PC-9 (cell line): ENCODE measurements at regions of chr11 and their contacts with region 1.

Region 1: DNA sequence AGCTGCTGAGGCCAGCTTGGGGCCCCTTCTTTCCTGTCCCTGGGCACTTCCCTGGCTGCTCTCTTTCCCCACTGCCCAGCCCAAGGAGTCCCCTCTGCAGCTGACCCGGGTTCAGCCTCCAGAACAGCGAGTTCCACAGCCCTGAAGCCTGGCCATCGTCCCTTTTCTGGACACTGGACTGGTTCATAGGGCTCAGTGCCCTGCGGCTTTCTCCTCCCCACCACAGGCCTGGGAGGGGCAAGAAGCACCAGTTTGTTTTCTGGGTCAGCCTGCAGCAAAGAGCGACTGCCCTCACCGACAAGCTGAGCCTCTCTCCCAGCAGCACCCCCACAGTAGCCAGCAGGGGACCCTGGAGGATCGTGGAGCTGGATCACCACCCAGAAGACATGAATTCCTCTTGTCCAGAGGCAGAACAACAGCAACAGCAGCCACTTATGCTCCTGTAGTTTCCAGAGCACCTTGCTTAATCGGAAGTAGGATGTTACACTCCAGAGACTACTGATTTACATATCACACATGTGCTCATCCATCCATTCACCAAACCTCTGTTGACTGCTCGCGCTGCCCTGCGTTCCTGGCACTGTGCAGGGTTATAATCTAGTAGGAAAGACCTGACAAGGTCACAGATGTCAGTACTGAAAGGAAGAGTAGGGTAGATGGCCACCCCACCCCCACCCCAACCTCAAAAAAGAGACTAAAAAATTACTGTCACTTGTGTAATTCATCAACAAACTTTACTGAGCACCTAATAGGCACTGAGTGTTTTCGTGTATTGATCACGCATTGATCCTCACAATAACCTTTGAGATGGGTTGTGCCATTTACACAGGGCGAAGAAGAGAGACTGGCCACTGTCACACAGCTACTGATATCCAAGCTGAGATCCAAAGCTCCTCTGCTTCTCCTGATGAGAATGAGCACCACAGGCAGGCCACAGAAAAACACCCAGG is 13.0 kb upstream of the CXCR5 start:
- DNase-seq: peak; percentile 64 to 67
- H3K4me3 ChIP-seq: peak overlapping the region; percentile 42; the same call in 1 of the 2 replicates
- H3K27ac ChIP-seq: peak overlapping the region; percentile 62
- H3K4me1 ChIP-seq: peaks cover 19% of the 10 kb centered on the region
- H3K27me3 ChIP-seq: no peaks in the 10 kb centered on the region
- CTCF ChIP-seq: no peak

Region 2: DNA sequence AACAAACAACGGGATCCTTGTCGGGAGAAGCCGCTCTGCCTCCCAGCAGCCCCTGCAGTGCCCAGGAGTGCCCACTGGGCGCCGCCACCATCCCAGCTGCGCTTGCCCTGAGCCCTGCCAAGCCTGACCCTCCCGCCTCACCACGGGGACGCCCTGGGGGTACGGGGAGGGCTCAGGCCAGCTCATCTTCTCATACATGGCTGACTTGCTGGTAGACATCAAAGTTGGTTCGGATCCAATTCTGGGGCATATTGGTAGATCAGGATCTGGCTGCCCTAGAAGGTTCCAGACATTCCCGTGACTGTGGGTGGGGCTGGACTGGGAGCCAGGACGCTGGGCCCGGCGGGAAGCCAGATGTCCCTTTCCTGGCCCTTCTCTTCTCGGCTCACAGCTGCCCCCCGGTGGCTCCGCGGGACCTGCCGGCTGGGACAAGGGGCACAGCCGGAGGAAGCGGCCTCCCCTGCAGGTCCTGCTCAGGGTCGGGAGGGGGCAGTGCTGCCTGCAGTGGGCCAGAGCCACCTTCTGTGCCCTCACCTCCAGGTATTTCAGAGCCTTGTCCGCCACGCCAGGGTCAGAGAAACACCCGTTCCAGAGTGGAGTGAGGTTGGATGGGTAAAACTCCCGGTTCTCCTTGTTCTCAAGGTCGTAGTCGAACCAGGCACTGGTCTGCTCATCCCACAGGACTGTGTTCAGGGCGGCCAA is 180.7 kb before region 1 on chr11:
- CTCF ChIA-PET with region 1: no interaction called
- POLR2A ChIA-PET with region 1: no interaction called
- intact Hi-C with region 1: loop called (anchors 1 kb)
- DNase-seq: peak; percentile 82 to 92
- H3K4me3 ChIP-seq: peak overlapping the region; percentile 61
- H3K27ac ChIP-seq: no peak overlapping the region
- H3K4me1 ChIP-seq: peaks cover 5% of the 10 kb centered on the region
- H3K27me3 ChIP-seq: no peaks in the 10 kb centered on the region
- CTCF ChIP-seq: peak; percentile 91

Region 3: DNA sequence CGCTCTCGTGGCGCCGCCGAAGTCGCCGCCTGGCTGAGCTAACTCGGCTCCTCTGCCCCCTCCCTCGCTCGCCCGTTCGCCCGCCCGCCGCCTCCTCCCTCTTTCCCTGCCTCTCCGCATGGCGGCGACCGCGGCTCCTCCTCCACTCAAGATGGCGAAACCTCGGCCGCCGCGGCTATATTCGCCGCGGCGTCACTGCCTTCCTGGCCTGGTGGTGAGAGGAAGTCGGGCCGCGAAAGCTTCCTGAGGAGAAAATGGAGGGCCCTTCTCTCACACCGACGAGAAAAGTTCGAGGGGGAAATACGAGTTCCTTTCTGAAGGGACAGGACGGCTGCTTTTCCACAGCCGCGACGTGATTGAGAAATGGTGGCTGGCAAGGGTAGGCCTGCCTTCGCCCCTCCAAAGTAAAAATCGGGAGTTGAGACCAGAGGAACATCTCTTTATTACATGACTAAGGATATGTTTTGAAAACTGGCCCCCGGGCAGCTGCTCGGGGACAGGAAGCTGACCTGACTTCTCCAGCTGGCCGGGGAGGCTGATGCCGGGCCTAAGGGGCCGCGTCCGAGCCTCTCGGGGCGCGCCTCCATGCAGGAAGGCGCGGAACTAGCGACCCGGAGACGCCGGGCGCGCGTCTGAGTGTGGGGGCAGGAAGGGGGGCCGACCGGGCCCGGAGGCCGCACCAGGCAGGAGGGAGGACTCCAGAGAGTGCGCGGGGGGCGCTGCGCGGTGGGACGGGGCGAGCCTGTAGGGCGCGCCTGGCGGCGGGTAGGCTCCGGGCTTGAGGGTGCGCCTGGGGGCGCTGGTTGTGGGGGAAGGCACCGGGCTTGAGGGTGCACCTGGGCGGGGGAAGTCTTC is 79.3 kb before region 1 on chr11 and contains the start of gene DDX6:
- CTCF ChIA-PET with region 1: interaction called, 7 read pairs
- POLR2A ChIA-PET with region 1: interaction called, 22 read pairs
- intact Hi-C with region 1: loop called (anchors 1 kb)
- DNase-seq: peak; percentile 73 to 85
- H3K4me3 ChIP-seq: peak within 1 kb of the TSS; percentile 98
- H3K27ac ChIP-seq: peak within 1 kb of the TSS; percentile 85
- H3K4me1 ChIP-seq: peaks cover 20% of the 10 kb centered on the region
- H3K27me3 ChIP-seq: no peaks in the 10 kb centered on the region
- CTCF ChIP-seq: peak; percentile 53
- total RNA-seq, gene DDX6: 73.1 and 84.4 TPM in 2 replicates

Region 4: GRCh38 chr11:118827118-118827517 is 43.6 kb before region 1 on chr11:
- CTCF ChIA-PET with region 1: no interaction called
- POLR2A ChIA-PET with region 1: no interaction called
- intact Hi-C with region 1: no loop called
- DNase-seq: no peak
- H3K4me3 ChIP-seq: no peak overlapping the region
- H3K27ac ChIP-seq: no peak overlapping the region
- H3K4me1 ChIP-seq: no peaks in the 10 kb centered on the region
- H3K27me3 ChIP-seq: no peaks in the 10 kb centered on the region
- CTCF ChIP-seq: no peak

Region 5: GRCh38 chr11:118851970-118852369 is 18.7 kb before region 1 on chr11:
- CTCF ChIA-PET with region 1: interaction called, 7 read pairs
- POLR2A ChIA-PET with region 1: no interaction called
- intact Hi-C with region 1: loop called (anchors 1 kb)
- DNase-seq: no peak
- H3K4me3 ChIP-seq: no peak overlapping the region
- H3K27ac ChIP-seq: no peak overlapping the region
- H3K4me1 ChIP-seq: no peaks in the 10 kb centered on the region
- H3K27me3 ChIP-seq: no peaks in the 10 kb centered on the region
- CTCF ChIP-seq: no peak

Region 6: DNA sequence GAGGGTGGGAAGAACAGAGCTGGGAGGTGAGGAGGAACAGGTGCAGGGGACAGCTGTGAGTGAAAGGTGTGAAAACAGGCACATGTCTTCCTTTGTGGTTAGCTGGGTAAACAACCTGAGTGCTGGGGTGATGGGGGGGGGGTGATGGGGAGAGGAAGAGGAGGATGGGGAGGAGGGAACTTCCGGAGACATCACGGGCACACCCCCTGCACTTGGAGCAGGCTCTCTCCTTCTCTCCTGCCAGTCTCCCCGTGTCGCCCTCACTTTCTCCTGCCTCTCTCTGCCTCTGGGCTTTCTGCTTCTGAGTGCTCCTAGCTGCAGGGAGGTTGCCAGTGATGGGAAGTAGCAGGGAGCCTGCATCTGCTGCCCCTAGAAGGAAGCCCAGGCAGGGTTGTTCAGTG is 21.9 kb after region 1 on chr11:
- CTCF ChIA-PET with region 1: interaction called, 3 read pairs
- POLR2A ChIA-PET with region 1: interaction called, 12 read pairs
- intact Hi-C with region 1: no loop called
- DNase-seq: peak; percentile 28 to 54
- H3K4me3 ChIP-seq: no peak overlapping the region
- H3K27ac ChIP-seq: no peak overlapping the region
- H3K4me1 ChIP-seq: peaks cover 22% of the 10 kb centered on the region
- H3K27me3 ChIP-seq: no peaks in the 10 kb centered on the region
- CTCF ChIP-seq: no peak

Region 7: DNA sequence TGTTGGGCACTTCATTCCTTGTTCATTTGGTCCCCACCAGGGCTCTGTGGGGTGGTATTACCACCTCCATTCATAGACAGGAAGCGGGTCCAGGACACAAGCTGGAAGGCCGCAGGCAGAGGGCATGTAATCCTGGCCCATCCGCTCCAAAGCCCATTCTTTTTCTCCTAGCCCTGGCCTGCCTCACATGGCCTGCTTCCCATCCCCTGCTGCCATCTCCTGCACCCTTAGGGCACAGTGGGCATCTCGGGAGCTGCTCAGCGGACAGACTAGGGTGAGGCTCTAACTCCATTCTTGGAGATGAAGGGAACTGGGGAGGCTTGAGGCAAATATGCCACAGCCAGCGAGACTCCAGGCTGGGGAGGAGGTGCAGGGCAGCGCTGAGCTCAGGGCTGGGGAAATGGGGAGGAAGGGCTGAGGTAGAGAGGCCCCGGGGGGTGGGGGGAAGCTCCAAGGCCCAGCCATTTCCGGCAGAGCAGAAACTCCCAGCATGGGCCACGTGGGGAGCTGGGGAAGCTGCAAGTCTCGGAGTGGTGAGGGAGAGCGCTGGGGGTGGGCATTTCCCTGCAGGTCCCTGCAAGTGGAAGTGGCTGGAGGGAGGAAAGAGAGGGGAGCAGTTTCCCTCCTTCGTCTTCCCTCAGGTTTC is 69.4 kb after region 1 on chr11:
- CTCF ChIA-PET with region 1: no interaction called
- POLR2A ChIA-PET with region 1: interaction called, 24 read pairs
- intact Hi-C with region 1: no loop called
- DNase-seq: peak in 1 of 2 experiments; percentile 19
- H3K4me3 ChIP-seq: no peak overlapping the region
- H3K27ac ChIP-seq: no peak overlapping the region
- H3K4me1 ChIP-seq: peaks cover 19% of the 10 kb centered on the region
- H3K27me3 ChIP-seq: no peaks in the 10 kb centered on the region
- CTCF ChIP-seq: no peak

Region 8: DNA sequence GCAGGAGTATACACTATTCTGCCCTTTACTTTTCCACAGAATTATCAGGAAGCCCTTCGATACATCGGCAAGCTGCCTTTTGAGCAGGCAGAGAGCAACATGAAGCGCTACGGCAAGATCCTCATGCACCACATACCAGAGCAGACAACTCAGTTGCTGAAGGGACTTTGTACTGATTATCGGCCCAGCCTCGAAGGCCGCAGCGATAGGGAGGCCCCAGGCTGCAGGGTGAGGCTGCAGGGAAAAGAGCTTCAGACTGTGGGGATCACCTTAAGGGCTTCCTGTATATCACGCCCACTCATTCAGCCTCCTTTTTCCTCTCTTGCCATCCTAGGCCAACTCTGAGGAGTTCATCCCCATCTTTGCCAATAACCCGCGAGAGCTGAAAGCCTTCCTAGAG is 207.2 kb after region 1 on chr11:
- CTCF ChIA-PET with region 1: no interaction called
- POLR2A ChIA-PET with region 1: no interaction called
- intact Hi-C with region 1: no loop called
- DNase-seq: peak in 1 of 2 experiments; percentile 28
- H3K4me3 ChIP-seq: no peak overlapping the region
- H3K27ac ChIP-seq: no peak overlapping the region
- H3K4me1 ChIP-seq: no peaks in the 10 kb centered on the region
- H3K27me3 ChIP-seq: no peaks in the 10 kb centered on the region
- CTCF ChIP-seq: no peak

Region 9: DNA sequence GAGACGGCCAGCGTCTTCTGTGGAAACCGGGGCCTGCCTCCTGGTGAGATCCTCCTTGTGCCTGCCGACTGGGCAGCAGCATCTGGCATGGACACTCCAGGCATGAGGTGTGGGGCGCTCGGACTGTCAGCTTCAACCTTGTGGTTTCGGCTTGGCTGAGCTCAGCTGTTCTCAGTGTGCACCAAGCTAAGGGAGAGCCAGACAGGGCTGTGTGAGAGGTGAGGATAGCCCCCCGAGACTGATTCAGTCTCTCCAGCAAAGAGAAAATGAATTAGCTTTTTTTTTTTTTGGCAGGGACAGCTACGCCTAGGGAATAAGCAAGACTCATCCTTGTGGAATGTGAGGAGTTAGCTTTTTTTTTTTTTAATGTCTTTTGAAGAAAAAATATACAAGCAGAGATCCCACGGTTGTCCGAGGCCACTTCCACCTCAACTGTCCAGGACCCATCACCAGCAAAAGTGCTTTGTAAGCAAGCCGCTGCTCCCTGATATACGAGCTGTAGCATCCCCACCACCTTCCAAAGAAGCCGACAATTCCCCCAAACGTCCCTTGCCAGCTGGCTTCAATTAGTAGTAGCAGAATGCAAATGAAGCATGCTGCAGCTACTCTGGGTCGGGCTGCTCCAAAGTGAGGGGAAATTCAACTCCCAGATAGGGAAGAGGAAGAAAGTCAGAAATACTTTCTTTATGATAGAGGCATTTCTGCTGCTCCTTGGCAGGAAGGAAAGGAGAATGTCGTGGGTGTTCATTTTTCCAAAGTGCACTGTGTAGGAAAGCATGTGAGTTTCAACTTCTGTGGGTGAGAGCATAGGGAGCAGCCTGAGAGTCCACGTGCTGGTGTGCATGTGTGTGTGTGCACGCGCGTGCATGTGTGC is 562.0 kb after region 1 on chr11:
- CTCF ChIA-PET with region 1: interaction called, 10 read pairs
- POLR2A ChIA-PET with region 1: no interaction called
- intact Hi-C with region 1: no loop called
- DNase-seq: no peak
- H3K4me3 ChIP-seq: no peak overlapping the region
- H3K27ac ChIP-seq: no peak overlapping the region
- H3K4me1 ChIP-seq: peaks cover 17% of the 10 kb centered on the region
- H3K27me3 ChIP-seq: no peaks in the 10 kb centered on the region
- CTCF ChIP-seq: no peak